ENCODE measurements at regions of chr20 and their contacts with region 1.

Region 1: GRCh38 chr20:9616833-9617489 is 102.6 kb downstream of the LAMP5 start:
- DNase-seq: peak; percentile 25 to 55
- ATAC-seq: peak; percentile 49 to 85 (median 64)
- H3K4me3 ChIP-seq: no peak overlapping the region
- H3K27ac ChIP-seq: no peak overlapping the region
- H3K4me1 ChIP-seq: no peaks in the 10 kb centered on the region
- H3K27me3 ChIP-seq: no peaks in the 10 kb centered on the region
- CTCF ChIP-seq: peak; percentile 87

Region 2: DNA sequence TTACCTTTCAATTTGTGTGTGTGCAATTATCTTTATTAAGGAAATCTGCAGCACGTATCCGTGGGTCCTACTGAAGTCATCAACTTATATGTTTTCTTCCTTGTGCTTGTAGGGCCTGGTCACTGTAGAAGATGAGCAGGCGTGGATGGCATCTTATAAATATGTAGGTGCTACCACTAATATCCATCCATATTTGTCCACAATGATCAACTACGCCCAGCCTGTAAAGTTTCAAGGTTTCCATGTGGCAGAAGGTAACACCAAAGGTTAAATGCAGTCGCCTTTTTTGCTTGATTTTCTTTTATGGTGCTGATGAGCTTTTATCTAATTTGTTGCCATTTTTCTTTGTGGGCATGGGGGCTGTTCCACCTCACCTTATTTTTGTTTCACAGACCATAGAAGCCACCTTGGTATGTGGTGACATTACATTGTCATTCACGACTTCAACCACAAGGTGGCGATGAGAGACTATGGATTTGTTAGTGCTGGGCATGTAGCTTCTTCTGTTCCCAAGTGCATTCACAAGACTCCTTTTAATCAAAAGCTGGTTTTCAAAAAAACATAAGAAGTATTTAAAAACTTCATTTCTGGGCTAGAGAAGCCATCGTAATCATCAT is 209.0 kb before region 1 on chr20:
- intact Hi-C with region 1: loop called in 1 of 2 experiments (anchors 2 kb)
- DNase-seq: no peak
- ATAC-seq: peak; percentile 58 to 88 (median 79)
- H3K4me3 ChIP-seq: no peak overlapping the region
- H3K27ac ChIP-seq: no peak overlapping the region
- H3K4me1 ChIP-seq: no peaks in the 10 kb centered on the region
- H3K27me3 ChIP-seq: no peaks in the 10 kb centered on the region
- CTCF ChIP-seq: peak; percentile 85

Region 3: DNA sequence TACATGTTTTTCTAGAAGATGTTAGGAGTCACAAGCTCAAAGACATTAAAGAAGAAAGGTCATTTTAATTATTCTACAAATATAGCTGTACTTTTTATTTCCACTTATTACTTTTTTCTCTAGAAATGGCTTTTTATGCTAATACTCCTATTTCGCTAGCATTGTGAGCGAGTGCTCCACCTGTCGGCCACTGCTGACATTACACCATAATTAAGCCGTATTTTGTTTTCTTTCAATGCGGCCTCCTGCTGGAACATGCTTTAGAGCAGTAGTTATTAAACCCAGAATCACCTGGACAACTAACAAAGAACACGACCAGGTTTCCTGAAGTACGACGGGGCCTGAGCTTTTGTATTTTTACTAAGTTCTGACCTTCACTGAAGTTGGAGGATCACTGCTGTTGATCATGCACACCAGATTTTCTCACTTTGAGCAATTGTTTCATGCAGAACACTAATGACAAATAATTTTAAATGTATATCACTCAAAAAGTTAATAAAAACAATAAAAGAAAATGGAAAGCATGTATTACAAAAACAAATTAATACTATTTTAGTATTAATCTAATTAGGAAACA is 296.0 kb after region 1 on chr20:
- intact Hi-C with region 1: loop called in 1 of 2 experiments (anchors 5 kb)
- DNase-seq: peak in 1 of 2 donors; percentile 17
- ATAC-seq: no peak
- H3K4me3 ChIP-seq: no peak overlapping the region
- H3K27ac ChIP-seq: no peak overlapping the region
- H3K4me1 ChIP-seq: no peaks in the 10 kb centered on the region
- H3K27me3 ChIP-seq: no peaks in the 10 kb centered on the region
- CTCF ChIP-seq: peak; percentile 77

Region 4: DNA sequence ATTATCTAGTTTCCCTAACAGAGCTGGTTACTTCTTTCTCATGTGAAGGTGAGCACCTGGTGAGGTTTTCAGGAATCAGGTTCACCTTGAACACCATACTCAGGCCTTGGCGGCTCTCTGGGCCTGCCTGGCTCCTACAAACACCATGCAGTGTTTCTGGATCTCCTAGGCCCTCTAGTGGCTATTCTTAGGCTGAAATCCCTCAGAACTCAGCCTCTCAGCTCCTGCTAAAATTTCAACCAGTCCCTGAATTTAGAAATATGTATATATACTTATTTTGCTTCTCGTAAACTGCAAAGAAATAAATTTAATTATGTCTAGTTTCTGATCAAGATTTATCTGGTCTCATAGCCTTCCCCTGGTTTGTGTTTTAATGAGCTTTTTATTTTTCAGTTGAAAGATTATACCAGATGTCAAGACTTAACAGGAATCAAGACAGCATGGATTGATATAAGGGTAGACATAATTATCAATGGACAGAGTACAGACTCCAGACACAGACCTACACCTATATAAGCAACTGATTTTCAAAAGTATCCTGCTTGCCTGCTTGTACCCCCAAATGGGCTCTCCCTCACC is 473.7 kb after region 1 on chr20:
- intact Hi-C with region 1: loop called (anchors 2 to 10 kb)
- DNase-seq: peak; percentile 12 to 39
- ATAC-seq: peak in 3 of 4 donors; percentile 63 to 73 (median 63)
- H3K4me3 ChIP-seq: no peak overlapping the region
- H3K27ac ChIP-seq: no peak overlapping the region
- H3K4me1 ChIP-seq: no peaks in the 10 kb centered on the region
- H3K27me3 ChIP-seq: no peaks in the 10 kb centered on the region
- CTCF ChIP-seq: peak; percentile 69